Panc1 (cell line): ENCODE measurements at regions of chr9 and their contacts with region 1.

Region 1: GRCh38 chr9:98192503-98193335 is at the start of gene CORO2A:
- DNase-seq: no peak
- ATAC-seq: peak; percentile 88
- H3K4me3 ChIP-seq: peak within 1 kb of the TSS; percentile 56 to 58
- H3K27ac ChIP-seq: peak within 1 kb of the TSS; percentile 12; the same call in 1 of the 2 replicates
- H3K4me1 ChIP-seq: no peaks in the 10 kb centered on the region; the same call in 1 of the 2 replicates
- H3K27me3 ChIP-seq: no peaks in the 10 kb centered on the region
- CTCF ChIP-seq: no peak
- total RNA-seq, gene CORO2A: 2.0 TPM

Region 2: DNA sequence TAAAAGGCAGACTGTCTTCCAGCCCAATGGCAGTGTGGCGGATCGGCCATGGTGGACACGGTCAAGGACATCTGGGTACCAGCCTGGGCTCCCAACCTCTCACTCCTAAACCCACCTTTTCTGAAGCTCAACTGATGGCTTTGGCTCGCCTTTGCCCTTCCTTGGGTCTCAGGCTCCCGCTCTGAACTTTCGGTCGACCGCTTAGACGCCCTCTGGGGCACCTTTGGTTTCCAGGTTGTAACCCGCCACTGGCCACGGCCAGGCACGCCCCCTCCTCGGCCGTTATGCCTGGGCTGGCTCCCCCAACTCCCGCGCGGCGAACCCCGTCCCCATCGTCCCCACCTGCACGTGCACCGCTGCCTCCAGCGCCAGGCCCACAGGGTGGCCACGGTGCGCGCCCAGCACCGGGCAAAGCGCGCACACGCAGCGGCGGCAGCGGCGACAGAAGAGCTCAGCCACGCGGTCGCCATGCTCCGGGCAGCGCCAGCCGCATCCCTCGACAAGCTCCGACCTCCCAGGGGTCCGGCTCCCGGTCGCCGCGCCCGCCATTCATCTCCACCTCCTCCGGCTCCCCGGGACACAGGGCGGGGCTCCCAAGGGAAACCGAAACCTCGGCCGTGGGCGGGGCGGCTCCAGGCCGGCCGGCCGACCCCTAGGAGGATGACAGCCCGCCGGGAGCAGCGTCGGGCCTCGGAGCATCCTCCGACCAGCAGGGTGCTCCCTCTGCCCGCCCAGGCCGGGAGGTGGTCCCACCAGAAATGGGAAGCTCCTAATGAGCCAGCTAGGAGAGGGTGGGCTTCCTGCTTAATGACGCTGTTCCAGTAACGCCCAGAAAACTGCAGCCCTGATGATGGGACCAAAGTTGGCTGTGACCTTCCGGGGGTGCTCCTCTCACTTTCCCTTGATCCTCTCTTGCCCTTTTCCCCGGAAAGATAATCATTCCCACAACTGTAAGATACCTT is 73.8 kb before region 1 on chr9 and contains the start of gene TRIM14:
- CTCF ChIA-PET with region 1: no interaction called
- POLR2A ChIA-PET with region 1: no interaction called
- in situ Hi-C with region 1: no loop called
- intact Hi-C with region 1: loop called (anchors 10 kb)
- DNase-seq: no peak
- ATAC-seq: peak; percentile 92
- H3K4me3 ChIP-seq: peak within 1 kb of the TSS; percentile 59 to 70
- H3K27ac ChIP-seq: peak within 1 kb of the TSS; percentile 60; the same call in 1 of the 2 replicates
- H3K4me1 ChIP-seq: no peaks in the 10 kb centered on the region
- H3K27me3 ChIP-seq: no peaks in the 10 kb centered on the region
- CTCF ChIP-seq: peak; percentile 43; the same call in 1 of the 2 replicates
- total RNA-seq, gene TRIM14: 9.7 TPM

Region 3: GRCh38 chr9:98241357-98242300 is 48.9 kb after region 1 on chr9:
- CTCF ChIA-PET with region 1: no interaction called
- POLR2A ChIA-PET with region 1: no interaction called
- in situ Hi-C with region 1: no loop called
- intact Hi-C with region 1: no loop called
- DNase-seq: no peak
- ATAC-seq: no peak
- H3K4me3 ChIP-seq: no peak overlapping the region
- H3K27ac ChIP-seq: no peak overlapping the region
- H3K4me1 ChIP-seq: no peaks in the 10 kb centered on the region
- H3K27me3 ChIP-seq: no peaks in the 10 kb centered on the region
- CTCF ChIP-seq: no peak